ENCODE measurements at regions of chr2 and their contacts with region 1.

Region 1: GRCh38 chr2:64730551-64731262 is 77.0 kb upstream of the SERTAD2 start:
- DNase-seq: peak; percentile 54
- H3K4me3 ChIP-seq: peak overlapping the region; percentile 62
- H3K27ac ChIP-seq: peak overlapping the region; percentile 97
- H3K4me1 ChIP-seq: peaks cover 82% of the 10 kb centered on the region
- CTCF ChIP-seq: no peak

Region 2: DNA sequence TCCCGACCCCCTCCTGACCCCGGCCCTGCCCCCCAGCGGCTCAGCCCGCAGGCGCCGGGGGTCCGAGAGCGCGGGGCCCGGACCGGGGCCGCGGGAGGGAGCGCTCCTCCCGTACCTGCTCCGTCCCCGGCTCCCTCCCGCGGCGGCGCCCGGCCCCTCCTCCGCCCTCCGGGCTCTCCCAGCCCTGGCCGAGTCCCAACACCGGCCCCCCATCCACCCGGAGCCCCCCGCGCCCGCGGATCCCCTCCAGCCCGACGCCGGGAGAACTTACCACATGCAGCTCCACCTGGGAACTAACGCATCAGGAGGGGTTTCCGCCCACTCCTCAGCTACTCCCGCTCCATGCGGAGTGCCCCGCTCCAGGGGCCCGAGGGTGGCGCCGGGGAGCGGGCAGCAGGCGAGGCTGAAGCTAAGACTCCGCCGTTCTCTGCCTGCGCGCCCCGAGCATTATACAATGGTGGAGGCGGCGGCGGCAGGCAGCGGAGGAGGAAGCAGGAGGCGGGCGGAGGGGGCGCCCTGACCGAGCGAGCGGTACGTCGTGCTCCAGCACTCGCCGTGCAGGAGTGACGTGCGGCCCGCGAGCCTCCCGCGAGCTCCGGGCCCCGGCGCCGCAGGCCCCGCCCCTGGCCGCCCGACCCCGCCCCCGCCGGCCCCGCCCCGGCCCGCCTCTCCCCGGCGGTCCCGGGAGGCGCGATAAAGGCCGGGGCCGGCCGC is 77.2 kb before region 1 on chr2 and contains the start of gene SERTAD2:
- CTCF ChIA-PET with region 1: interaction called, 8 read pairs
- POLR2A ChIA-PET with region 1: interaction called, 123 read pairs
- intact Hi-C with region 1: loop called (anchors 1 kb)
- DNase-seq: peak; percentile 95
- H3K4me3 ChIP-seq: peak within 1 kb of the TSS; percentile 93
- H3K27ac ChIP-seq: peak within 1 kb of the TSS; percentile 95
- H3K4me1 ChIP-seq: peaks cover 74% of the 10 kb centered on the region
- CTCF ChIP-seq: peak; percentile 49
- total RNA-seq, gene SERTAD2: 10.7 and 11.5 TPM in 2 replicates

Region 3: DNA sequence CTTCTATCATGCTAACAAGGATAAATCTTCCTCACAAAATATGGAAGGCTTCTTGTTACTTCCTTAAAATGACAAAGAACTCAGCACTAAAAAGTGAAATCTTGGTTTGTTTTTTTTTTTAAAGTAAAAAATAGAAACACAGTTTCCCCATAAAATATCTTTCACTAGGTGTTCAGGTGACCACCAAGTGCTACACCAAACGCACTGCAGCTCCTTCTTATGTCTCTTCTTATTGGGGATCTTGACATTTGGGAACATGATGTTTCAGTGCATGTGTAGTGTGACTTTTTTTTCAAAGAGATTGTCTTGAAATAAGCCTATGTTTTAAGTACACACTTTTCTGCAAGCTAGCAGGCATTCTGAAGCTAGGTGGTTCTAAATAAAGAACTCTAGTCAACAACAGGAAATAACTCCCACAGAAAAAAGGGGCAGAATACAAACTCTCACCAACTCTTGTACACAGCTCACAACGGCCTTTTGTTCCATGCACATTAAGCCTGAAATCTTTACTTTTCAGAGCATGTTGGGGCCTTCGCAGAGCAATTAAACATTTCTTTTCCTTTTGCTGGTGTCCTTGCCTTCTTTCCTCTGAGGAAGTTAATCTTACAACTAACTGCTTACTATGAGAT is 63.8 kb before region 1 on chr2:
- CTCF ChIA-PET with region 1: interaction called, 4 read pairs
- POLR2A ChIA-PET with region 1: interaction called, 44 read pairs
- intact Hi-C with region 1: loop called (anchors 2 kb)
- DNase-seq: peak; percentile 79
- H3K4me3 ChIP-seq: peak overlapping the region; percentile 45
- H3K27ac ChIP-seq: peak overlapping the region; percentile 95
- H3K4me1 ChIP-seq: peaks cover 77% of the 10 kb centered on the region
- CTCF ChIP-seq: no peak

Region 4: DNA sequence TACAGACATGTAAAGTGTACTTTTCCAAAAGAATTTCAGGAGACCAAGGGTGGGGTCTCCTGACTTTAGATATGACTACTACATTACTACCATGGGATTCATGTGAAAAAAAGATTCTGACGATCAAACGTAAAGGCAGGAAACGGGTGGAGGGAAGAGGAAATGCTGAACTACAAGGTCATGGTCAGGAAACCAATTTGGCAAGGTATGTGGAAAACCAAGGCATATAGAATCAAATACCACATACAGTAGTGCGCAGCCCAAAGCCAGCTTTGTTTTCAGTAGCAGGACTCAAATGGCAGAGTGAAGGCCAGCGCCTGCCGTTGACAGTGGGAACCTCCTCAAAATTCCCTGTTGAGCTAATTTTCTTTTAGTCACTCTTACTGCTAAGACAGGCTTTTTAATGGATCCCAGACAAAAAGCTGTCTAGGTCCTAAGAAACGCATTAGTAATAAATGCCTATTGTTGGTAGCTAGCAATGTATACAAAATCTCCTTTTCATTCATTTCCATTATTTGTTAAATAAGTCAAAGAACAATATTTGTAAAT is 19.4 kb before region 1 on chr2:
- CTCF ChIA-PET with region 1: interaction called, 4 read pairs
- POLR2A ChIA-PET with region 1: interaction called, 42 read pairs
- intact Hi-C with region 1: no loop called
- DNase-seq: no peak
- H3K4me3 ChIP-seq: no peak overlapping the region
- H3K27ac ChIP-seq: no peak overlapping the region
- H3K4me1 ChIP-seq: peaks cover 6% of the 10 kb centered on the region
- CTCF ChIP-seq: no peak

Region 5: GRCh38 chr2:64745562-64745961 is 14.9 kb after region 1 on chr2:
- CTCF ChIA-PET with region 1: interaction called, 12 read pairs
- POLR2A ChIA-PET with region 1: interaction called, 146 read pairs
- intact Hi-C with region 1: loop called (anchors 1 kb)
- DNase-seq: peak; percentile 56
- H3K4me3 ChIP-seq: peak overlapping the region; percentile 85
- H3K27ac ChIP-seq: peak overlapping the region; percentile 92
- H3K4me1 ChIP-seq: peaks cover 75% of the 10 kb centered on the region
- CTCF ChIP-seq: no peak